CD8-positive, alpha-beta T cell (primary cell): ENCODE measurements at regions of chr11 and their contacts with region 1.

Region 1: DNA sequence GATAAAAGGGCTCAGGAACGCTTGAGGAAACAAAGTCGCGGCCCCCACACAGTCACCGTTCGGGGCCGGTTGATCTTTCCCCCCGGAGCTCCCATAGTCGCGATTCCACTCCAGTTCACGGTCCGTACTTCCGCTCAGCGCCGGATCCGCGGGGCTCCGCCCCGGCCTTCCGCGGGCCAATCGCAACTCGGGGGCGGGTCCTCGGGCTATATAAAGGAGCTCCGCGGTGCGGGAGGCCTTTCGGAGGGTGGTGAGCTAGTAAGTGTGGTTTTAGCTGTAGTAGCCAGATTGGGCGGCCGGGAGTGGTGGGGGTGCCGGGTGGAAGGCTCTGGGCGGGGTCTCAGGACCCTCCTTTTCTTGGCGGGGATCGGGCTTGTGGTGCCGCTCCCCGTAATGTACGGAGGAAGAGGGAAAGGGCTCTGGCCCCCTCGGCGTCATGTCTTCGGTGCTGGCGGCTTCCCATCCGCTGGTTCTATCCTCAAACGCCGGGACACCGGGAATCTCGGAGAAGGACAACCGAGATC is at the starts of genes C11orf98 and CSKMT:
- DNase-seq: peak; percentile 92 to 98 (median 95)
- ATAC-seq: peak; percentile 87
- H3K4me3 ChIP-seq: peak within 1 kb of the TSS; percentile 95 to 97
- H3K4me3 Mint-ChIP-seq: peak within 1 kb of the TSS; percentile 96
- H3K27ac ChIP-seq: peak within 1 kb of the TSS; percentile 81 to 92
- H3K27ac Mint-ChIP-seq: peak within 1 kb of the TSS; percentile 93
- H3K4me1 ChIP-seq: peaks cover 31% of the 10 kb centered on the region
- H3K4me1 Mint-ChIP-seq: peaks cover 45% of the 10 kb centered on the region
- H3K27me3 ChIP-seq: no peaks in the 10 kb centered on the region
- H3K27me3 Mint-ChIP-seq: no peaks in the 10 kb centered on the region
- CTCF ChIP-seq: no peak
- total RNA-seq, gene C11orf98: 22.5 to 25.7 TPM
- total RNA-seq, gene CSKMT: 25.4 to 25.7 TPM

Region 2: DNA sequence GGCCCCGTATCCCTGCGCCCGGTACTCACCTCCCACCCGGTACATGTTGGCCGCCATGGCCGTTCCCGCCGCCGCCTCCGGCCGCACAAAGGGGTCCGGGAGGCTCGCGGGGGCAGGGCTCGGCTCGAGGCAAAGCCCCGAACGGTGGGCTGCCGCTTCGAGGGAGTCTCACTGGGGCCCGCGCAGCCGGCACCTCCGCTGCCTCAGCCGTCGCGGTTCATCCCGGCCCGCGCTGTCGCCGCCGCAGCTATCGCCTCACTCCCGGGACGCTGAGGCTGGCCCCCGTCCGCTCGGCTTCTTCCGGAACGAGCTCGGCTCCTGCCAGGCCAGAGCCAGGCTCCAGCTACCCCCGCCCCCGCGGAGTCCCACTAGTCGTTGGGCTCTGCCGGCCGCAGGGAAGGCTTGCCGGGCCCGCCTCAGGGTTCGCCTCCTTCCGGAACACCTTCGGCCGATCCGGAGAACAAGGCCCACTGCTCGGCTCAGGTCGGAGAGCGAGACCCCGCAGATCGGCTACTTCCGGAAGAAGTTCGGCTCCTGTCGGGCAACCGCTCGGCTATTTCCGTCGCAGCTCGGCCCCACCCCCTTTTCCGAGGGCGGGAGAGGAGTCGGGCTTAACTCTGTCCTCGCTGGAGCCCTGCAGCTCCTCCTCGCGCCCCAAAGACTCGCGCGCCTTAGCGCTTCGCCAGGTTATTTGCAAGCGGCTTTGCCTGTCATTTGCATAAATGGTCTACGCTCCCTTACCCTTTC is 63.6 kb before region 1 on chr11 and contains the start of gene MTA2:
- CTCF ChIA-PET with region 1: interaction called, 3 read pairs
- POLR2A ChIA-PET with region 1: interaction called, 48 read pairs
- intact Hi-C with region 1: loop called in 1 of 2 experiments (anchors 1 kb)
- DNase-seq: peak; percentile 98 to 100 (median 99)
- ATAC-seq: peak; percentile 77
- H3K4me3 ChIP-seq: peak within 1 kb of the TSS; percentile 62 to 98
- H3K4me3 Mint-ChIP-seq: peak within 1 kb of the TSS; percentile 89
- H3K27ac ChIP-seq: peak within 1 kb of the TSS; percentile 83 to 86
- H3K27ac Mint-ChIP-seq: peak within 1 kb of the TSS; percentile 92
- H3K4me1 ChIP-seq: peaks cover 22% of the 10 kb centered on the region
- H3K4me1 Mint-ChIP-seq: peaks cover 57% of the 10 kb centered on the region
- H3K27me3 ChIP-seq: no peaks in the 10 kb centered on the region
- H3K27me3 Mint-ChIP-seq: no peaks in the 10 kb centered on the region
- CTCF ChIP-seq: no peak
- total RNA-seq, gene MTA2: 148 to 154 TPM

Region 3: DNA sequence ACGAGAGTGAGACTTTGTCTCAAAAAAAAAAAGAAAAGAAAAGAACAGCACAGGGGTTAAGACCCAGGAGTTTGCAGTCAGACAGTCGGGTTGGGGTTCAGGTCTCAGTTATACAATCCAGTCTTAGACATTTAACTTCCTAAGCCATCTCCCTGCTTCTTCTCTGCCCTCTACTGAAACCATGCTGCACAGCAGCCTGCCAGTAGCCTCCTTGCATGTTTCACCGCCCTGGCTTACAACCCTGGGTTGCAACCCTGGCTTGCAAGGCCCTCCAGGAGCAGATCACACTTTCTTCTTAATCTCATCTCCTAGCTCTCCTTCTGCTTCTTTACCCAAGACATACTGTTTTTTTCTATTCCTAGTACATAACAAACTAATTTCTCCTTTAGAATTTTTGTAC is 37.4 kb before region 1 on chr11:
- CTCF ChIA-PET with region 1: no interaction called
- POLR2A ChIA-PET with region 1: interaction called, 39 read pairs
- intact Hi-C with region 1: loop called (anchors 1 kb)
- DNase-seq: peak in 1 of 9 experiments; percentile 31
- ATAC-seq: peak; percentile 37
- H3K4me3 ChIP-seq: no peak overlapping the region
- H3K4me3 Mint-ChIP-seq: no peak overlapping the region
- H3K27ac ChIP-seq: no peak overlapping the region
- H3K27ac Mint-ChIP-seq: no peak overlapping the region
- H3K4me1 ChIP-seq: no peaks in the 10 kb centered on the region
- H3K4me1 Mint-ChIP-seq: peaks cover 7% of the 10 kb centered on the region
- H3K27me3 ChIP-seq: no peaks in the 10 kb centered on the region
- H3K27me3 Mint-ChIP-seq: no peaks in the 10 kb centered on the region
- CTCF ChIP-seq: no peak

Region 4: GRCh38 chr11:62678770-62679696 is 13.9 kb after region 1 on chr11 and contains the start of gene UBXN1:
- CTCF ChIA-PET with region 1: interaction called, 7 read pairs
- POLR2A ChIA-PET with region 1: interaction called, 26 read pairs
- intact Hi-C with region 1: loop called in 1 of 2 experiments (anchors 1 kb)
- DNase-seq: peak; percentile 59 to 92 (median 85)
- ATAC-seq: peak; percentile 74
- H3K4me3 ChIP-seq: peak within 1 kb of the TSS; percentile 91 to 100
- H3K4me3 Mint-ChIP-seq: peak within 1 kb of the TSS; percentile 90
- H3K27ac ChIP-seq: peak within 1 kb of the TSS; percentile 87 to 94
- H3K27ac Mint-ChIP-seq: peak within 1 kb of the TSS; percentile 93
- H3K4me1 ChIP-seq: peaks cover 26% of the 10 kb centered on the region
- H3K4me1 Mint-ChIP-seq: peaks cover 39% of the 10 kb centered on the region
- H3K27me3 ChIP-seq: no peaks in the 10 kb centered on the region
- H3K27me3 Mint-ChIP-seq: no peaks in the 10 kb centered on the region
- CTCF ChIP-seq: no peak
- total RNA-seq, gene UBXN1: 232 to 242 TPM

Region 5: GRCh38 chr11:62753736-62754603 is 88.8 kb after region 1 on chr11 and contains the start of gene ZBTB3:
- CTCF ChIA-PET with region 1: no interaction called
- POLR2A ChIA-PET with region 1: interaction called, 14 read pairs
- intact Hi-C with region 1: no loop called
- DNase-seq: peak; percentile 93 to 100 (median 96)
- ATAC-seq: peak; percentile 93
- H3K4me3 ChIP-seq: peak within 1 kb of the TSS; percentile 72 to 88
- H3K4me3 Mint-ChIP-seq: peak within 1 kb of the TSS; percentile 99
- H3K27ac ChIP-seq: peak within 1 kb of the TSS; percentile 64 to 91
- H3K27ac Mint-ChIP-seq: peak within 1 kb of the TSS; percentile 98
- H3K4me1 ChIP-seq: peaks cover 28% of the 10 kb centered on the region
- H3K4me1 Mint-ChIP-seq: peaks cover 32% of the 10 kb centered on the region
- H3K27me3 ChIP-seq: no peaks in the 10 kb centered on the region
- H3K27me3 Mint-ChIP-seq: no peaks in the 10 kb centered on the region
- CTCF ChIP-seq: no peak
- total RNA-seq, gene ZBTB3: 3.7 to 4.8 TPM